CD8-positive, alpha-beta memory T cell (primary cell): ENCODE measurements at regions of chr4 and their contacts with region 1.

Region 1: GRCh38 chr4:119212234-119212963 is at the start of gene USP53:
- DNase-seq: peak; percentile 96 to 99 (median 97)
- H3K4me3 ChIP-seq: peak within 1 kb of the TSS; percentile 98
- H3K4me3 Mint-ChIP-seq: peak within 1 kb of the TSS; percentile 95 to 100 (median 98)
- H3K27ac ChIP-seq: peak within 1 kb of the TSS; percentile 69
- H3K27ac Mint-ChIP-seq: peak within 1 kb of the TSS; percentile 94 to 99 (median 96)
- H3K4me1 ChIP-seq: peaks cover 23% of the 10 kb centered on the region
- H3K4me1 Mint-ChIP-seq: peaks cover 37 to 51% (median 42%) of the 10 kb centered on the region in 3 donors
- H3K27me3 ChIP-seq: no peaks in the 10 kb centered on the region
- H3K27me3 Mint-ChIP-seq: no peaks in the 10 kb centered on the region
- total RNA-seq, gene USP53: 9.8 to 10.5 TPM

Region 2: GRCh38 chr4:118981839-118982381 is 230.5 kb before region 1 on chr4:
- CTCF ChIA-PET with region 1: no interaction called
- POLR2A ChIA-PET with region 1: no interaction called
- DNase-seq: peak; percentile 10 to 60 (median 25)
- H3K4me3 ChIP-seq: no peak overlapping the region
- H3K4me3 Mint-ChIP-seq: no peak overlapping the region
- H3K27ac ChIP-seq: no peak overlapping the region
- H3K27ac Mint-ChIP-seq: no peak overlapping the region
- H3K4me1 ChIP-seq: no peaks in the 10 kb centered on the region
- H3K4me1 Mint-ChIP-seq: peaks cover 0 to 3% (median 0%) of the 10 kb centered on the region in 3 donors
- H3K27me3 ChIP-seq: no peaks in the 10 kb centered on the region
- H3K27me3 Mint-ChIP-seq: peaks cover 0 to 9% of the 10 kb centered on the region in 2 donors

Region 3: DNA sequence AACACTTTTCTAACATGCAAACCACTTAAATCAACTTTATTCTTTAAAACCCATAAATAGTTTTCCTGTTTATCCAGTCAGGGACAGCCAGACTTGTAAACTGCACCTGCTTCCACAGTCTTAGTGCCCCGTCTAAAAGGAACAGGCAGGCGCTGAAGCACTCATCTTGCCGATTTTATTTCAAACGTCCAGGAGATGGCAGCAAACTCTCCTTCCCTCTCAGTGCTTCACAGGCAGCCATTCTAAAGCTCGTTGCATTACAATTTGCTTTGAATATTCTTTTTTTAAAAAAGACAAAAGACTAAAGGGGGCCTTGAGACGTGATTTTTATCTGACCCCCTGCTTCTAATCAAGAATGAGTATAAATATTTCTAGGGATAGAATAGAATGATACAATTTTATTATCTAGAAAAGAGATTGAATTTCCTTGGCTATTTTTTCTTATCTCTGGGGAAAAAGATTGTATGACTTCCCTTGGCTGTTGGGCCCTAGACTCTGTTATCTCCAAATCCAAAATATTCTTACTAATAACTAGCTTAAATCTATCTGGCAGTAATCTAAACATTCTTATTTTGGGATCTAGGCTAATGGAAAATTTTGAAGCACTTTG is 170.3 kb before region 1 on chr4:
- CTCF ChIA-PET with region 1: interaction called, 11 read pairs
- POLR2A ChIA-PET with region 1: interaction called, 6 read pairs
- DNase-seq: peak; percentile 15 to 68 (median 47)
- H3K4me3 ChIP-seq: no peak overlapping the region
- H3K4me3 Mint-ChIP-seq: no peak overlapping the region
- H3K27ac ChIP-seq: no peak overlapping the region
- H3K27ac Mint-ChIP-seq: no peak overlapping the region
- H3K4me1 ChIP-seq: peaks cover 4% of the 10 kb centered on the region
- H3K4me1 Mint-ChIP-seq: peaks cover 0 to 7% (median 2%) of the 10 kb centered on the region in 3 donors
- H3K27me3 ChIP-seq: no peaks in the 10 kb centered on the region
- H3K27me3 Mint-ChIP-seq: peaks cover 0 to 12% of the 10 kb centered on the region in 2 donors

Region 4: DNA sequence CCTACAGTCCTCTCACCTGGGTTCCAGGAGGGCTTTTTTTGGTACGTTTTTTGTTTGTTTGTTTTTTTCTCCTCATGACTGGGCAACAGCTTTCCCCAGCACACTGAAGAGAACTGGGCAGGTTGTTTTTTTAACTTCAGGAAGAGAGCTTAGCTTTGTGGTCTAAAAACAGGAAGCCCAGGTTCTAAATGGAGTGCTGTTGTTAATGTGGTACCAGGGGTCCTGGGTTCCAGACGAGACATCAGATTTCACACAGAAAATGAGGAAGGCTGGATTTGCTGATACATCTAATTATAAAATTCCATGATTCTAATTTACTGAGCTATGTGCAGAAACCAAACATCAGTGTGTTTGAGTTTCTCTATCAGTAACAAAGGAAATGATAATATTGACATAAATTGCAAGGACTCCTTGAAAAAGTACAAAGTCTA is 72.6 kb before region 1 on chr4:
- CTCF ChIA-PET with region 1: no interaction called
- POLR2A ChIA-PET with region 1: interaction called, 11 read pairs
- DNase-seq: peak in 1 of 5 donors; percentile 8
- H3K4me3 ChIP-seq: no peak overlapping the region
- H3K4me3 Mint-ChIP-seq: peak overlapping the region; percentile 6 to 76 (median 60)
- H3K27ac ChIP-seq: no peak overlapping the region
- H3K27ac Mint-ChIP-seq: peak overlapping the region; percentile 24 to 94 (median 75)
- H3K4me1 ChIP-seq: peaks cover 29% of the 10 kb centered on the region
- H3K4me1 Mint-ChIP-seq: peaks cover 29 to 53% (median 35%) of the 10 kb centered on the region in 3 donors
- H3K27me3 ChIP-seq: no peaks in the 10 kb centered on the region
- H3K27me3 Mint-ChIP-seq: peaks cover 0 to 1% of the 10 kb centered on the region in 2 donors

Region 5: DNA sequence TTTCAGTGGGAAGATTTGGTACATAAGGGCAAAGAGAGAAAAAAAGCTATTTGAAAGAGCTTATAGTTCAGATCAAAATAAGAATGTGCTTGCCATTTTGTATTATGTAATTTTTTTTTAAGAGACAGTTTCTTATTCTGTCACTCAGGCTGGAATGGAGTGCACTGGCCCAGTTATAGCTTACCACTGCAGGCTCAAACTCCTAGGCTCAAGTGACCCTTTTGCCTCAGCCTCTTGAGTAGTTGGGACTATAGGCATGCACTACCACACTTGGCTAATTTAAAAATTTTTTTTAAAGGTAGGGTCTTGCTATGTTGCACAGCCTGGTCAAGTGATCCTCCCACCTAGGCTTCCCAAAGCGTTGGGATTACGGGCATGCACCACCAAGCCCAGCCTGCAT is 22.0 kb before region 1 on chr4:
- CTCF ChIA-PET with region 1: no interaction called
- POLR2A ChIA-PET with region 1: no interaction called
- DNase-seq: no peak
- H3K4me3 ChIP-seq: no peak overlapping the region
- H3K4me3 Mint-ChIP-seq: no peak overlapping the region
- H3K27ac ChIP-seq: no peak overlapping the region
- H3K27ac Mint-ChIP-seq: no peak overlapping the region
- H3K4me1 ChIP-seq: no peaks in the 10 kb centered on the region
- H3K4me1 Mint-ChIP-seq: no peaks in the 10 kb centered on the region
- H3K27me3 ChIP-seq: no peaks in the 10 kb centered on the region
- H3K27me3 Mint-ChIP-seq: peaks cover 1 to 3% of the 10 kb centered on the region in 2 donors

Region 6: GRCh38 chr4:119300101-119300978 is 87.9 kb after region 1 on chr4:
- CTCF ChIA-PET with region 1: interaction called, 3 read pairs
- POLR2A ChIA-PET with region 1: interaction called, 24 read pairs
- DNase-seq: peak; percentile 84 to 92 (median 89)
- H3K4me3 ChIP-seq: peak overlapping the region; percentile 99
- H3K4me3 Mint-ChIP-seq: peak overlapping the region; percentile 94 to 100 (median 98)
- H3K27ac ChIP-seq: peak overlapping the region; percentile 97
- H3K27ac Mint-ChIP-seq: peak overlapping the region; percentile 96 to 100 (median 97)
- H3K4me1 ChIP-seq: peaks cover 19% of the 10 kb centered on the region
- H3K4me1 Mint-ChIP-seq: peaks cover 34 to 48% (median 40%) of the 10 kb centered on the region in 3 donors
- H3K27me3 ChIP-seq: no peaks in the 10 kb centered on the region
- H3K27me3 Mint-ChIP-seq: peaks cover 0 to 14% of the 10 kb centered on the region in 2 donors